Heart right ventricle (tissue), 16 donors: ENCODE measurements at regions of chr7 and their contacts with region 1.

Region 1: DNA sequence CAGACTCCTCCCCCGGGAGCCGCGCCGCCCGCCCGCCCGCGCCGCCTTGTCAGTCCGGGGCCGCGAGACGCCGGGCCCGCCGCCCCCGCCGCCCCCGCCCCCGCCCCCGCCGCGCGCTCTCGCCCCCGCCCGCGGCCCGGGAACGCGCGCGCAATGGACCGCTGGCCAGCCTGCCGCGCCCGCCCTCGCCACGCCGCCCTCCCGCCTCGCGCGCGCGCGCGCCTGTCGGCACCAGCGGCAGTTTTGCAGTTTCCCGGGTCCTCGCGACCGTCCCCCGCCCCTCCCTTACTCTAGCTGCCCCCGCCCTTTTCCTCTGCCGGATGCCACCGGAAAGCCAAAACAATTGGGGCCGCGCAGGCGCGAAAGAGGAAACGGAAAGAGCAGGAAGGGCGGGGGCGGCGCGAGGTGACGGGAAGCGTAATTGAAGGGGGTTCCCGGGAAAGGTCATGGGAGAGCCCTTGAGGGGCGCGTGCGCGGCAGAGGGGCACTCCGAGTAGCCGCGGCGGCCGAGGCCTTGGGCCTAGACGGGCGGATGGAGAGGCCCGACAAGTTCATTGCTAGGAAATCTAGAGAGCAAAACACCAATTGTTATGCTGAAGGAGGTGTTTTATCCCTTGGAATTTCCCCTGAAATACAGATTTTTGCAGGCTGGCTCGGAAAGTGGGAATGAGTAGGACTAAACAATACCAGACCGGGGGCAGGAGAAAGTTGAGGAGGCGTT is 400 bp upstream of the KBTBD2 start:
- DNase-seq: peak; percentile 98 to 99
- ATAC-seq: peak; percentile 86 to 95 (median 94)
- H3K4me3 ChIP-seq: peak overlapping the region; percentile 15 to 84 (median 75)
- H3K27ac ChIP-seq: peak overlapping the region; percentile 93 to 99 (median 98)
- H3K4me1 ChIP-seq: peaks cover 0 to 56% (median 49%) of the 10 kb centered on the region in 9 donors
- H3K27me3 ChIP-seq: no peaks in the 10 kb centered on the region
- CTCF ChIP-seq: no peak

Region 2: DNA sequence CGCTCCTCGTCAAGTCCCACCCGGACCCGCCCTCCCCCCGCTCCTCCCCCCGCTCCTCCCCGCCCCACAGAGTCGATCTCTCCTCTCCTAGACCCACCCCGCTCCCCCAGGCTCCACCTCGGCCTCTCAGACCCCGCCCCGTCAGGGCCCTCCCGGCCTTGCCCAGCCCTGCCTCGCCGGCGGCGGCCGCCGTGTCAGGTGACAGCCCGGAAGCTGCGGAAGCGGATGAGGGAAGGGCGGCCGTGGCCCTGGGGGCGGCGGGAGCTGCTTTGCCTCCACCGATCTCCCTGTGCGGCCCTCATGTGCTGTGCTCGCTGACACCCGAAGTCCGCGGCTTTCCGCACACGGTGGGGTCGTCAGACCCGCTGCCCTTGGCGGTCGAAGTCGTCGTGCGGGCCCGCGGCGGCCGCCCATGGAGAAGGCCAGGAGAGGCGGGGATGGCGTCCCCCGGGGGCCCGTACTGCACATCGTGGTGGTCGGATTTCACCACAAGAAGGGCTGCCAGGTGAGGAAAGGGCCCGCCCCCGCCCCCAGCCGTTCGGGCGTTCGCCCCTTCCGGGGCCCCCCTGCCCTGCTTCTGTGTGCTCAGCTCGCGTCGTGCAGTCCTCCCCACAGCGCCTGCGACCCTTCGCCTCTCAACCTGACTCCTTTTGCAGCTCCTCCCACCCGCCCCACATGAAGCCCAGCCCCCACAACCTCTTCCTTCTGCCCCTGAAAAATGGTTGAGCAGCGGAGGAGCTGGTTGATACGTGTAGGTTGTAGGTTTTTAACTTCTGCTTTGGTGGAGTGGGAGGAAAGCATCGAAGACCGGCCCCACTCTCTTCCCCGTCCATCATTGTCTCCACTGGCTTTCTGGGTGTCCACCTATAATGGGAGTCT is 396.4 kb before region 1 on chr7 and contains the start of gene AVL9:
- intact Hi-C with region 1: loop called in 3 of 10 experiments (anchors 5 kb)
- DNase-seq: peak; percentile 98 to 99
- ATAC-seq: peak; percentile 98 to 100 (median 99)
- H3K4me3 ChIP-seq: peak within 1 kb of the TSS; percentile 74 to 100 (median 94)
- H3K27ac ChIP-seq: peak within 1 kb of the TSS; percentile 84 to 100 (median 98)
- H3K4me1 ChIP-seq: peaks cover 0 to 39% (median 24%) of the 10 kb centered on the region in 9 donors
- H3K27me3 ChIP-seq: no peaks in the 10 kb centered on the region
- CTCF ChIP-seq: no peak
- total RNA-seq, gene AVL9: 11.1 to 21.7 (median 15.3) TPM

Region 3: GRCh38 chr7:32871624-32872371 is 20.2 kb before region 1 on chr7:
- intact Hi-C with region 1: loop called in 1 of 10 experiments (anchors 2 kb)
- DNase-seq: peak in 1 of 2 donors; percentile 12
- ATAC-seq: peak; percentile 53 to 81 (median 65)
- H3K4me3 ChIP-seq: no peak overlapping the region
- H3K27ac ChIP-seq: peak overlapping the region in 8 of 10 donors; percentile 8 to 67 (median 39)
- H3K4me1 ChIP-seq: peaks cover 0 to 77% (median 40%) of the 10 kb centered on the region in 9 donors
- H3K27me3 ChIP-seq: no peaks in the 10 kb centered on the region
- CTCF ChIP-seq: no peak

Region 4: GRCh38 chr7:32921896-32922295 is 29.9 kb after region 1 on chr7:
- intact Hi-C with region 1: no loop called
- DNase-seq: no peak
- ATAC-seq: no peak
- H3K4me3 ChIP-seq: no peak overlapping the region
- H3K27ac ChIP-seq: no peak overlapping the region
- H3K4me1 ChIP-seq: peaks cover 0 to 8% (median 0%) of the 10 kb centered on the region in 9 donors
- H3K27me3 ChIP-seq: no peaks in the 10 kb centered on the region
- CTCF ChIP-seq: no peak

Region 5: DNA sequence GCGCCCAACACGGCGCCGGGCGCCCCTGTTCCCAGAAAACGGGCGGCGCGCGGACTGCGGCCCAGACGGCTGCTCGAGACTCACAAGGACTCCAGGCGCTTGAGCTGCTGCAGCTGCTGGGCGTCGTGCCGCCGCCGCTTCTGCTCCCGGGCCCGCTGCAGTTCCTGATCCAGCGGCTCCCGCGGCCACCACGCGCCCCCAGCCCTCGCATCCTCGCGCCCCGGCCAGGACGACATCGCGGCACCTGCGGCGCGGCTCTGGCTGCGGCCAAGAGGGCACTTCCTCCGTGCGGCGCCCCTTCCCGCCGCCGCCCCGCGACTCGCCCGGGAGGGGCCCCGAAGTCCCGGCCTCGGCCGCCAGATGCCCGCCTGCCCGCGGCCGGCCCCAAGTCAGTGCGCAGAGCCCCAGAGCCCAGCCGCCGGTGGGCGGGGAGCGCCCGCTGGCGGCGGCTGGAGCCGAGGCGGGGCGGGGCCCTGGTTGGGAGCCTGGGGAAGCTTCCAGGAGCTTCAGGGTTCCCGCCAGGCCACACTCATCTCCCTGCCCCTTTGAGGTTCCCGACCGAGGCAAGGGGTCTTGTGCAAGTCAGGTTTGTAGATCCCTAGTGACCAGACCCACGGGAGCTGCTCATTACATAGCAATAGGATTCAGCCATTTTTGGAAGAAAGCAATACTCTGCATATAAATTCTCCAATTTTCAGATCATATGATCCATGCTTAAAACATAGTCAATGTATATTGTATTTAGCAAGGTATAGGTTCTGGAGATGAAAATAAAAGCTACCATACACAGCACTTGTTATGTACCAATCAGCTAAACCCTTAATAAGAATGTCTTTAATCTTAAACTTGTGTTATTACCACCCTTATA is 51.1 kb after region 1 on chr7:
- intact Hi-C with region 1: loop called in 7 of 10 experiments (anchors 2 to 5 kb)
- DNase-seq: peak; percentile 75 to 85
- ATAC-seq: peak; percentile 93 to 97 (median 96)
- H3K4me3 ChIP-seq: peak overlapping the region; percentile 40 to 99 (median 87)
- H3K27ac ChIP-seq: peak overlapping the region; percentile 76 to 99 (median 98)
- H3K4me1 ChIP-seq: peaks cover 0 to 43% (median 30%) of the 10 kb centered on the region in 9 donors
- H3K27me3 ChIP-seq: no peaks in the 10 kb centered on the region
- CTCF ChIP-seq: peak; percentile 59 to 87 (median 73)

Region 6: GRCh38 chr7:33040803-33041516 is 149.0 kb after region 1 on chr7:
- intact Hi-C with region 1: loop called in 1 of 10 experiments (anchors 5 kb)
- DNase-seq: no peak
- ATAC-seq: peak in 6 of 8 donors; percentile 71 to 84 (median 82)
- H3K4me3 ChIP-seq: peak overlapping the region in 9 of 10 donors; percentile 2 to 67 (median 52)
- H3K27ac ChIP-seq: peak overlapping the region in 8 of 10 donors; percentile 19 to 87 (median 70)
- H3K4me1 ChIP-seq: peaks cover 5 to 72% (median 62%) of the 10 kb centered on the region in 9 donors
- H3K27me3 ChIP-seq: no peaks in the 10 kb centered on the region
- CTCF ChIP-seq: no peak